Breast epithelium (tissue), 4 donors: ENCODE measurements at regions of chr3 and their contacts with region 1.

Region 1: DNA sequence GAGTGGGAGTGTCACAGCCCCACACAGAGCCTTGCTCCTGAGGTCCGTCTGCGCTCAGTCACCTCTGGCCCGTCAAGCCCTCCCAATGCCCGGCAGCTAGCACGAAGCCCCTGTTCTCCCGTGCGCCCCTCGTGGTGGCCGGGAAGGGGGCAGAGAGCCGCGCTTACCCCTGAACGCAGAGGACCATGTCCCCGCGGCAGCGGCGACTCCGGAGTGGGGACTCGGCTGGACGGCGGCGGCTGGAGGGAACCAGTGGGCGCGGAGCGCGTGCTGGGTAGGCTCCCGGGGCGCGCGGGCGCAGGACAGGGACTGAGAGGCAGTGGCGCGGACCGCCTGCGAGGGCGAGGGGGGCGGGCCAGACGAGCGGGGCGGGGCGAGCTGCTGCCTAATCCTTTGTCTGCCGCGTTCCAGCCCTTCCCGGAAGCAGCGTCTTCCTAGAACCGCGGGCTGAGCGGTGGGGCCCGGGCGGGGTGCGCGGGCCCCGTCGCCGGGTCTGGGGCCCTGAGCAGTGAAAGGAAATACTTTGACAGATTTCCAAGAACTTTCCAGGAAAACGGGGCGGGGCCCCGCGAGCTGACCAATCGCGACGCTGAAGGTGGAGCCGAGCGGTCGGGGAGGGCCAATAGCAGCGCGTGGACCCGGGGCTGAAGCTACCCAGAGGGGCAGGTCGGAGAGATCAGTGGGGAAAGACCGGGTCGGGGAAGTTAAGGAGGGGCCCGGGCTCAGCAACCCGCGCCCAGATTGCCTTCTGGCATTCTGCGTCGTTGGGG is at the start of gene CISH:
- DNase-seq: peak; percentile 92 to 95
- H3K4me3 ChIP-seq: peak within 1 kb of the TSS; percentile 61 to 95 (median 76)
- H3K27ac ChIP-seq: peak within 1 kb of the TSS; percentile 91 to 98
- H3K4me1 ChIP-seq: peaks cover 15 to 35% of the 10 kb centered on the region in 2 donors
- H3K27me3 ChIP-seq: no peaks in the 10 kb centered on the region
- CTCF ChIP-seq: peak; percentile 34 to 37 (median 37)
- POLR2A ChIP-seq: peak; percentile 79
- total RNA-seq, gene CISH: 5.4 to 29.6 (median 17.4) TPM

Region 2: GRCh38 chr3:50189274-50189673 is 422.4 kb before region 1 on chr3:
- intact Hi-C with region 1: no loop called
- DNase-seq: peak; percentile 79 to 81
- H3K4me3 ChIP-seq: no peak overlapping the region
- H3K27ac ChIP-seq: no peak overlapping the region
- H3K4me1 ChIP-seq: peaks cover 4 to 5% of the 10 kb centered on the region in 2 donors
- H3K27me3 ChIP-seq: peaks cover 14 to 16% of the 10 kb centered on the region in 2 donors
- CTCF ChIP-seq: peak; percentile 52 to 89 (median 78)
- POLR2A ChIP-seq: no peak

Region 3: DNA sequence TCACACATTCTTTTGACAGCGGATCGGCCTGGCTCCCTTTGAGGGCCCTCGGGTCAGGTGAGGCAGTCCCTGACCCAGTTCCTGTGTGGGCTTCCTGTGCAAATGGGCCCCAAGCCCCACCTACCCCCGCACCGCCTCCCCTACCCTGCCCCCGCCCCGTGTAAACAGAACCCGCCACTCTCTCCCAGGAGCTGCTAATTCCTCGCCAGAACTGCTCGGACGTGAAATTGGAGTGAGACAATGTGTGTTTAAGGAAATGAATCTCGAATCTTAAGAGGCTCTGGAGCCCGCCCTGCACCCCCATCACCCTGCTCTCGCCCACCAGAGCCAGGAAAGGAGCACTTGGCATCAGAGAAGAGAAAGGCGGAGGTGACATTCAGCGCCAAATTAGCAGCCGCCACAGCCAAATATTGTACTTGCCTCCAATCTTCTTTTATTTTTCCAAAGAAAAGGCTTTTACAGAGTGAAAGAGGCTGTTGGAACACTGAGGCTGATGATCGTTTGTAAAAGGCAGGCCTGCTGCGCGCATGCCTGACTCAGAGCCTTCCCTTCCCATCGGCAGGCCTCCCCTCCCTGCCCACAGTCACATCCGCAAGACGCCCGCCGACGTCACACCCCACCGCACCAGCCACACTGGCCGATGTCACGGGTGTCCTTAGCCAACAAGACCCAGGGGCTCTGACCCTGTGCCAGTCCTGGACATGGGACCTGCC is 161.3 kb before region 1 on chr3:
- intact Hi-C with region 1: no loop called
- DNase-seq: peak; percentile 75
- H3K4me3 ChIP-seq: peak overlapping the region in 2 of 3 donors; percentile 41 to 59
- H3K27ac ChIP-seq: peak overlapping the region; percentile 77 to 84
- H3K4me1 ChIP-seq: no peaks in the 10 kb centered on the region
- H3K27me3 ChIP-seq: no peaks in the 10 kb centered on the region
- CTCF ChIP-seq: no peak
- POLR2A ChIP-seq: no peak

Region 4: DNA sequence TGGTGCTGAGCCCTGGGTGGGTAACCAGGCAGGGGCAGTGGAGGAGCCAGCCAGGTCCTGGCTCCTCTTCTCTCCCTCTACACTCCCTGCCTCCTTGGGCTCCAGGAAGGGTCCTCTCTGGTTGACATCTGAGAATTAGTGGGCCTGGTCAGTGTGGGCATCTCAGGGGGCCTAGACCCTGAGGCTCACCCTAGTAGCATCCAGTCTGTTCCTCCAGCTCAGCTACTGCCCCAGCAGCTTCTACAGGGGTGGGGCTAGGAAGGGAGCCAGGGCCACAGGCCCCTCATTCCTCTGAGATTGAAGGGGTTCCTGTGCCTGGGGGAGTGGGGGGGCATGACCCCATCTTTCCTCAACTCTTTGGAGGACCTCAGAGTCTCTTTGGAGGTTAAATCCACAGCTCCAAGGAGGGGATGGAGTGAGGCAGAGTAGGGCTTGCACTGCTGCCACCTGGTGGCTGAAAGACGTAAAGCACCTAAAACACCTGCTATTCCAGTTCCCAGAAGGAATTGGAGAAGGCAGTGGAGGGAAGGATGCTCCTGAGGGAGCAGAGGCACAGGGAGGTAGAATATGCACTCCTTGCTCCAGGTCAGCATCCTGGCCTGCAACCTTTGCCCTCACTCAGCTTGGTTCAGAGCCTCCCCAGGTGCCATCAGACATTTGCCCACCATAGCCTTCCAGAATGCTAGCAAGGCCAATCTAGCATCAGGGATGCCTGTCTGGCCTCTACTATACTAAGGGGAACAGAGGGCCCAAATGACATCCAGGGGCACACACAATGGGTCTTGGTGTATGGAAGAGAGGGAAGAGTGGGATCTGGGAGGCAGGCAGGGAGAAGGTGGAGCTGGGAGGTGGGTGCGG is 69.2 kb before region 1 on chr3:
- intact Hi-C with region 1: no loop called
- DNase-seq: peak; percentile 60 to 78
- H3K4me3 ChIP-seq: no peak overlapping the region
- H3K27ac ChIP-seq: no peak overlapping the region
- H3K4me1 ChIP-seq: no peaks in the 10 kb centered on the region
- H3K27me3 ChIP-seq: no peaks in the 10 kb centered on the region
- CTCF ChIP-seq: peak; percentile 81 to 88 (median 83)
- POLR2A ChIP-seq: no peak

Region 5: DNA sequence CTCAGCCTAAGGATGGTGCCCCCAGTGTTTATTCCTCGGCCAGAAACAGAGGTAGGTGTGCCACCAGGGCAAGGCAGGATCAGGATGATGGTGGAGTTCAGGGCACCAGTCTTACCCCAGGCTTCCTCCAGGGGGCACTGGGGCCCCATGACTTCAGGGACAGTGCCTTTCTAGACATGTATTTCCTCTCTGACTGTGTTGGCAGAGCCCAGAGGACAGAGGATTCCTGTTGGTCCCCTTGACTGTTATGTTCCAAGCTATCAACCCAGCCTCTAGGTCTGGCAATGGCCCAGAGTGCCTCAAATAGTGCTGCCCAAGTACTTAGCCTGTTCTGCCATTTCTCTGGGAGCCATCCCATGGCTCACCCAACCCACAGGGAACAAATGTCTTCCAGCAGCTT is 39.5 kb before region 1 on chr3:
- intact Hi-C with region 1: loop called (anchors 2 kb)
- DNase-seq: peak; percentile 70 to 71
- H3K4me3 ChIP-seq: no peak overlapping the region
- H3K27ac ChIP-seq: peak overlapping the region; percentile 25 to 59
- H3K4me1 ChIP-seq: no peaks in the 10 kb centered on the region
- H3K27me3 ChIP-seq: no peaks in the 10 kb centered on the region
- CTCF ChIP-seq: peak; percentile 87 to 97 (median 95)
- POLR2A ChIP-seq: no peak

Region 6: GRCh38 chr3:51384726-51385473 is 773.3 kb after region 1 on chr3 and contains the start of gene MANF:
- intact Hi-C with region 1: loop called (anchors 5 kb)
- DNase-seq: peak; percentile 97 to 99
- H3K4me3 ChIP-seq: peak within 1 kb of the TSS; percentile 70 to 92 (median 90)
- H3K27ac ChIP-seq: peak within 1 kb of the TSS; percentile 90 to 97
- H3K4me1 ChIP-seq: peaks cover 5 to 34% of the 10 kb centered on the region in 2 donors
- H3K27me3 ChIP-seq: no peaks in the 10 kb centered on the region
- CTCF ChIP-seq: peak; percentile 43 to 52 (median 44)
- POLR2A ChIP-seq: peak; percentile 52
- total RNA-seq, gene MANF: 34.2 to 80.6 (median 40.0) TPM